Right ventricle myocardium inferior (tissue), 1 donor: ENCODE measurements at regions of chr11 and their contacts with region 1.

Region 1: GRCh38 chr11:75445315-75445953 is 12.4 kb upstream of the KLHL35 start:
- DNase-seq: peak; percentile 75
- ATAC-seq: peak; percentile 59

Region 2: DNA sequence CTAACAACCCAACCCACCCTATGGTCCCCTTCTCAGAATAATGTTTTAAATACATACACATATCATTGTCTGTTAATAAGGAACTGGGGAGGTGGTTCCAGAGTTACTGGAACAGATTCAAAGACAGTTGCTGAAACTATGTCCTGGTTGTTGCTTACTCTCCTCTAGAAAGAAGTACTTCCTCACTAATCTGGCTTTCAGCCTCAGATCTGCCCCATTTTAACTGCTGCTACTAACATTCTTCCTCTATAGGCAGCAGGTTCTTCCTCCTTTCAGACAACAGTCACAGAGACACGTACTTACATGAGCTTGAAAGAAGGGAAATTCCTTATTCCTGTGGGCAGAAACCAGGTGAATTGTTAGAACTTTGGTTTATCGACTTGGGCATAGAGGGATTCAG is 464.8 kb before region 1 on chr11:
- intact Hi-C with region 1: no loop called
- DNase-seq: no peak
- ATAC-seq: no peak

Region 3: DNA sequence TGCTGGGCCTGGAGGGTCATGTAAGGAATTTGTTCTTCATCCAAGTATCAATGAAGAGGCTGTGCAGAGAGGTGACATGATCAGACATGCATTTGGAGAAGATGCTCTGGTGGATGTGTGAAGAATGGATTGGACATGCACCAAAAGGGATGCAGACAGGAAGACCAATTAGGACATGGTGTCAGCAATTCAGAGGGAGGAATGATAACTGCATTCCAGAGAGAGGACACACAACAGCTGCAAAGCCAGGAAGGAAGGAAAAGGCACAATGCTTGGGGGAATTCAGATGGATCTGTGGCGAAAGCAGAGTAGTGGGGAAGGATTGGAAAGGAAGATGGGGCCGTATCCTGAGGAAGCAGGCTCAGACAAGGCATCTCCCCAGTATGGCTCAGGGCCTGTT is 88.8 kb before region 1 on chr11:
- intact Hi-C with region 1: no loop called
- DNase-seq: no peak
- ATAC-seq: no peak

Region 4: GRCh38 chr11:75371941-75372789 is 73.3 kb before region 1 on chr11:
- intact Hi-C with region 1: no loop called
- DNase-seq: no peak
- ATAC-seq: peak; percentile 56

Region 5: GRCh38 chr11:75525596-75526541 is 80.4 kb after region 1 on chr11 and contains the start of gene GDPD5:
- intact Hi-C with region 1: loop called (anchors 1 kb)
- DNase-seq: peak; percentile 91
- ATAC-seq: peak; percentile 98
- total RNA-seq, gene GDPD5: 7.7 TPM

Region 6: GRCh38 chr11:75532200-75533048 is 87.0 kb after region 1 on chr11:
- intact Hi-C with region 1: loop called (anchors 1 kb)
- DNase-seq: peak; percentile 72
- ATAC-seq: peak; percentile 45